ENCODE measurements at regions of chr3 and their contacts with region 1.

Region 1: GRCh38 chr3:12810013-12810780 is 13.7 kb downstream of the CAND2 start:
- DNase-seq: peak; percentile 86
- H3K4me3 Mint-ChIP-seq: peak overlapping the region; percentile 26
- H3K27ac Mint-ChIP-seq: no peak overlapping the region
- H3K4me1 Mint-ChIP-seq: peaks cover 5% of the 10 kb centered on the region
- H3K27me3 Mint-ChIP-seq: peaks cover 6% of the 10 kb centered on the region

Region 2: DNA sequence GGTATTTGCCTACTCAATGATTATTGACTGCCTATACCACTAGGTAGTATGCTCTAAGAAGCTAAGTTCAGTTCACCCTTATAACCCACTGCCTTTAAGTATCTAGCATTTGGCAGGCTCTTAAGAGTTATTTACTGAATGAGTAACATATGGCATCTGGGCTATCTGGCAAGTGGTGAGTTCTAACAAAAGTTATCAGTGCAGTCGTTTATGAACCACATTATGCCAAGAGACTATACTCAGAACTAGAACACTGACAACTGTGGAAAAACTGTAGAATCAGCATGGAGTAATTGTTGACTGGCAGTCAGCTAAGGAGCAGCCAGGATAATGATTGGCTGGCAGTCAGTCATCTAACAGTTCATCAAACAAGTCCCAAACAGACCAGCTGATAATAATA is 172.1 kb before region 1 on chr3:
- intact Hi-C with region 1: no loop called
- DNase-seq: no peak
- H3K4me3 Mint-ChIP-seq: no peak overlapping the region
- H3K27ac Mint-ChIP-seq: no peak overlapping the region
- H3K4me1 Mint-ChIP-seq: peaks cover 5% of the 10 kb centered on the region
- H3K27me3 Mint-ChIP-seq: no peaks in the 10 kb centered on the region

Region 3: GRCh38 chr3:12706504-12707253 is 103.5 kb before region 1 on chr3:
- intact Hi-C with region 1: loop called (anchors 1 kb)
- DNase-seq: peak; percentile 53
- H3K4me3 Mint-ChIP-seq: no peak overlapping the region
- H3K27ac Mint-ChIP-seq: no peak overlapping the region
- H3K4me1 Mint-ChIP-seq: no peaks in the 10 kb centered on the region
- H3K27me3 Mint-ChIP-seq: peaks cover 8% of the 10 kb centered on the region

Region 4: GRCh38 chr3:12822725-12823373 is 12.7 kb after region 1 on chr3:
- intact Hi-C with region 1: loop called (anchors 2 kb)
- DNase-seq: no peak
- H3K4me3 Mint-ChIP-seq: no peak overlapping the region
- H3K27ac Mint-ChIP-seq: no peak overlapping the region
- H3K4me1 Mint-ChIP-seq: no peaks in the 10 kb centered on the region
- H3K27me3 Mint-ChIP-seq: no peaks in the 10 kb centered on the region

Region 5: GRCh38 chr3:12868039-12869034 is 58.1 kb after region 1 on chr3:
- intact Hi-C with region 1: loop called (anchors 1 kb)
- DNase-seq: peak; percentile 43
- H3K4me3 Mint-ChIP-seq: peak overlapping the region; percentile 65
- H3K27ac Mint-ChIP-seq: no peak overlapping the region
- H3K4me1 Mint-ChIP-seq: peaks cover 17% of the 10 kb centered on the region
- H3K27me3 Mint-ChIP-seq: peaks cover 29% of the 10 kb centered on the region

Region 6: DNA sequence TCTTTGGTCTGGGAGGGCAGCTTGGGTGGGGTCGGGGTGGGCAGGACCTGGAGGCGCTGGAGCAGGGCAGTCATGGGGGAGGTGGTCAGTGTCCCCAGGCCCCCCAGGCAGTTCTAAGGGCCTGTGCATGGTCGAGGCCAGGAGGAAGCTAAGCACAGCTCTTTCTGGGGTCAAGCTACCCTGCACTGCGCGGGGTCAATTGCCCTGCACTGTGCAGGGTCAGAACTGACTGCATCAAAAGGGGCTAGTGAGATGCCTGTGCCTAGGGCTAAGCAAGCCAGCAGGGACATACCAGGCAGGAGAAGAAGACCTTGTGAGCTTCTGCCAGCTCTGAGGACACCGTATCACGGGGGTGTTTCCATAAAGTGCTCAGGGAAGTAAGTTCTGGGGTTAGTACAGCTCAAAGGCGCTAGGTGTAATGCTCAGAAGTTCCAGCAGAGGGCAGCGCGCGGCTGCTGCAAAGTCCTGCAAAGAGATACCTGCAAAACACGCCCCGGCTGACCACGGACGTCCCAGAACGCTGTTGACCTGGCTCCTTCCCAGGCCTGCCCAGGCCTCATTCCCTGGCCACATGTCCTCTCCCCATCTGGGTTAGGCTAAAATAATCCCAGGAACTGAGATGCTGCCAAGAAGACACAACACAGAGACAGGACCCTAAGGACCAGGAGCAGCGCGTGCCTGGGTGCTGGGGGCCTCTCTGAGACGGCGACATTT is 281.9 kb after region 1 on chr3:
- intact Hi-C with region 1: no loop called
- DNase-seq: peak; percentile 71
- H3K4me3 Mint-ChIP-seq: no peak overlapping the region
- H3K27ac Mint-ChIP-seq: no peak overlapping the region
- H3K4me1 Mint-ChIP-seq: peaks cover 3% of the 10 kb centered on the region
- H3K27me3 Mint-ChIP-seq: peaks cover 5% of the 10 kb centered on the region